CD4-positive, alpha-beta memory T cell (primary cell): ENCODE measurements at regions of chr16 and their contacts with region 1.

Region 1: GRCh38 chr16:18969050-18969854 is 14.5 kb upstream of the TMC7 start:
- DNase-seq: peak; percentile 57 to 73 (median 61)
- H3K4me3 ChIP-seq: no peak overlapping the region
- H3K4me3 Mint-ChIP-seq: peak overlapping the region in 6 of 8 donors; percentile 21 to 59 (median 49)
- H3K27ac ChIP-seq: no peak overlapping the region
- H3K27ac Mint-ChIP-seq: no peak overlapping the region
- H3K4me1 ChIP-seq: no peaks in the 10 kb centered on the region
- H3K4me1 Mint-ChIP-seq: peaks cover 0 to 6% (median 2%) of the 10 kb centered on the region in 4 donors
- H3K27me3 ChIP-seq: no peaks in the 10 kb centered on the region
- H3K27me3 Mint-ChIP-seq: peaks cover 0 to 2% of the 10 kb centered on the region in 2 donors

Region 2: GRCh38 chr16:18950469-18951185 is 18.6 kb before region 1 on chr16:
- CTCF ChIA-PET with region 1: interaction called, 14 read pairs
- POLR2A ChIA-PET with region 1: no interaction called
- intact Hi-C with region 1: no loop called
- DNase-seq: no peak
- H3K4me3 ChIP-seq: no peak overlapping the region
- H3K4me3 Mint-ChIP-seq: peak overlapping the region in 1 of 8 donors; percentile 25
- H3K27ac ChIP-seq: no peak overlapping the region
- H3K27ac Mint-ChIP-seq: no peak overlapping the region
- H3K4me1 ChIP-seq: peaks cover 17% of the 10 kb centered on the region
- H3K4me1 Mint-ChIP-seq: peaks cover 8 to 15% (median 10%) of the 10 kb centered on the region in 4 donors
- H3K27me3 ChIP-seq: no peaks in the 10 kb centered on the region
- H3K27me3 Mint-ChIP-seq: no peaks in the 10 kb centered on the region

Region 3: GRCh38 chr16:19067349-19068236 is 98.3 kb after region 1 on chr16 and contains the start of gene COQ7:
- CTCF ChIA-PET with region 1: no interaction called
- POLR2A ChIA-PET with region 1: no interaction called
- intact Hi-C with region 1: loop called (anchors 5 kb)
- DNase-seq: peak; percentile 99 to 100 (median 100)
- H3K4me3 ChIP-seq: peak within 1 kb of the TSS; percentile 79 to 99
- H3K4me3 Mint-ChIP-seq: peak within 1 kb of the TSS; percentile 92 to 96 (median 94)
- H3K27ac ChIP-seq: peak within 1 kb of the TSS; percentile 100
- H3K27ac Mint-ChIP-seq: peak within 1 kb of the TSS; percentile 93 to 99 (median 99)
- H3K4me1 ChIP-seq: peaks cover 9% of the 10 kb centered on the region
- H3K4me1 Mint-ChIP-seq: peaks cover 3 to 24% (median 14%) of the 10 kb centered on the region in 4 donors
- H3K27me3 ChIP-seq: no peaks in the 10 kb centered on the region
- H3K27me3 Mint-ChIP-seq: peaks cover 0 to 6% of the 10 kb centered on the region in 2 donors
- total RNA-seq, gene COQ7: 16.2 to 19.2 TPM